Heart right ventricle (tissue), 16 donors: ENCODE measurements at regions of chr6 and their contacts with region 1.

Region 1: DNA sequence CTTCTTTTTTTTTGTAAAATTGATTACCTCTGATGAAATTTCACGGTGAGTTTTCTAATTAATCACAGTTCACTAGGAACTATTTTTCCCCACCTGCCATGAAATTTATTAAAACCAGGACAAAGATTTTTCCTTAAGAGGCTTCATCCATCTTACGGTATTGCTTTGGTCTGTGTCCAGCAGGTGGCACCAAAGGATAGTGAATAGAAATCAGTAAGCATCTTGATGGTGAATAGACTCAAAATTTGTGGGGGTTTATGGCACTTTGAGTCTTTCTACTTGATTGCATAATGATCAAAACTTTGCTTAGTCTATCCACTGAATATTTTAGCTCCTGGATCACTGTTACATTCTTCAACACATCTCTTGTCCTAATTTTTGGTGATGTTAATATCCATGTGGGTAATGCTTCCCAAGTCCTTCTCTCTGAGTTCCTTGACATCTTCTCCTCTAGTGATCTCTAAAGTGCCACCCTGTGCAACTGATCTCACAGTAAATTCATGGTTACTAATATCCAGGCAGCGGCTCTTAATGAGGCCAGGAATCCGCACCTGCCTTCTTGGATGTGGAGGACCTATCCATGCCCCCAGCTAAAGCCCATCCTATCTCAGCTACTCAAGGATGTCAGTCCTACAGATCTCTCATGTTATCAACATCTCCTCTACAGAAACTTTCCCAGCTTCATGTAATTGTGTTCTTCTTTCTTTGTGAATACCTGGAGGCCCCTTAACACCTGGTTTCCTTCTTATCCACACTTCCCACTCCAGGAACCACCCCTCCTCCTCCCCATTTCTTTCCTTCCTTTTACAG is 54.5 kb downstream of the STMND1 start:
- DNase-seq: peak in 1 of 2 donors; percentile 74
- ATAC-seq: peak in 4 of 8 donors; percentile 47 to 76 (median 51)
- H3K4me3 ChIP-seq: no peak overlapping the region
- H3K27ac ChIP-seq: no peak overlapping the region
- H3K4me1 ChIP-seq: no peaks in the 10 kb centered on the region
- H3K27me3 ChIP-seq: peaks cover 0 to 10% (median 0%) of the 10 kb centered on the region in 7 donors
- CTCF ChIP-seq: peak; percentile 71 to 92 (median 84)

Region 2: GRCh38 chr6:17803409-17803808 is 647.1 kb after region 1 on chr6:
- intact Hi-C with region 1: loop called in 9 of 10 experiments (anchors 2 to 10 kb)
- DNase-seq: no peak
- ATAC-seq: no peak
- H3K4me3 ChIP-seq: no peak overlapping the region
- H3K27ac ChIP-seq: no peak overlapping the region
- H3K4me1 ChIP-seq: no peaks in the 10 kb centered on the region
- H3K27me3 ChIP-seq: no peaks in the 10 kb centered on the region
- CTCF ChIP-seq: no peak

Region 3: GRCh38 chr6:17808609-17809008 is 652.3 kb after region 1 on chr6:
- intact Hi-C with region 1: loop called in 9 of 10 experiments (anchors 2 to 10 kb)
- DNase-seq: no peak
- ATAC-seq: no peak
- H3K4me3 ChIP-seq: no peak overlapping the region
- H3K27ac ChIP-seq: no peak overlapping the region
- H3K4me1 ChIP-seq: peaks cover 0 to 4% (median 0%) of the 10 kb centered on the region in 9 donors
- H3K27me3 ChIP-seq: no peaks in the 10 kb centered on the region
- CTCF ChIP-seq: no peak

Region 4: DNA sequence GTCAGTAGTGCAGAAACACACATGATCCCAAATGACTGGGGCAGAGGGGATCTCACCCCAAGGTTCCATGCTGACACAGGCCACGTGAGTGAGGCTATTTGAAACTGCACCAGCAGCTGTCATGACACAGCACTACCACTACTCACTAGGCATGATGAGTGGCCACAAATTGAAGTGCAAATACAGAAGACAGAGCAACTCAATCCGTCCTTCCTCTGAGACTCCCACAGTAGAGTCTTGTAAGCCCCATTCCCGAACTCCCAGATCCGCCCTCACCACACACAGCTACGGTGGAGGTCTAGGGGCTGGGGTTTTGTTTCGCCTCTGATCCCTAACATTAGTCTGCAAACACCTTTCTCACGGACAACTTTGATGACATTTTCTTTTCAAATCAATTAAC is 663.7 kb after region 1 on chr6:
- intact Hi-C with region 1: loop called in 1 of 10 experiments (anchors 5 kb)
- DNase-seq: no peak
- ATAC-seq: peak in 4 of 8 donors; percentile 31 to 61 (median 52)
- H3K4me3 ChIP-seq: no peak overlapping the region
- H3K27ac ChIP-seq: no peak overlapping the region
- H3K4me1 ChIP-seq: no peaks in the 10 kb centered on the region
- H3K27me3 ChIP-seq: no peaks in the 10 kb centered on the region
- CTCF ChIP-seq: peak in 1 of 9 donors; percentile 15